Panc1 (cell line): ENCODE measurements at regions of chr3 and their contacts with region 1.

Region 1: DNA sequence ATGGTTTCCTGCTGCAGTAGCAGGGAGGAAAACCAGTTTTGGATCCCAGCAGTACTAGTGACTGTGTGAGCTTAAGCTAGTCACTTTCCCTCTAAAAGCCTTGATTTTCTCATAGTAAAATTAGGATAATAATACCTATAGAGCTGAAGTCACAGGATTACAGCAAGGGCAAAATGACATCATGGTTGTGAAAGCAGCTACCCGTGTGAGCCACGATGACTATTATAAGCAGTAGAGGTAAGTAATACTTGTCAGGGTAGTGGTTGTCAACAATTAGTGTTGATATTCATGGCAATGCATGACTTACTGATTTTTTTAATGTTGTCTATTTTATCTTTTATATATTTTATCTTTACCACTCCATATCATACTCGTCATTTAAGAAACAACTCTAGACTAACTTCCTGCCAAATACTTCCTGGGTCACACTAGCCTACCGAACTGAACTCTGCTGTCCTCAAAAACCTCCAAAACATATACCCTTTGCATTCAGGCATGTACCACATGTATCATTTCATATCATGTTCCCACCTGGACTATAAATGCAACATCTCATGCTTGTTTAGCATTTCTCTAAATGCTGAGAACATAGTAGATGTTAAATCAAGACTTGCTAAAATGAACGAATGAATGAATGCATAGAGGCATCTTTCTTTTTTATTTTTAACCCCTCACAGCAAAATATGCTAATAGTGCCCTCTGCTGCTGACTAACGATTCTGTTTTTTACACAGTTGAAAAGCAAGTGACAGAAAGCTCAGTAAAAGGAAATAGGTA is 172.6 kb downstream of the P3H2 start:
- DNase-seq: peak; percentile 75
- ATAC-seq: peak; percentile 60
- H3K4me3 ChIP-seq: no peak overlapping the region
- H3K27ac ChIP-seq: peak overlapping the region; percentile 1; the same call in 1 of the 2 replicates
- H3K4me1 ChIP-seq: no peaks in the 10 kb centered on the region
- H3K27me3 ChIP-seq: no peaks in the 10 kb centered on the region
- CTCF ChIP-seq: peak; percentile 73; the same call in 1 of the 2 replicates

Region 2: DNA sequence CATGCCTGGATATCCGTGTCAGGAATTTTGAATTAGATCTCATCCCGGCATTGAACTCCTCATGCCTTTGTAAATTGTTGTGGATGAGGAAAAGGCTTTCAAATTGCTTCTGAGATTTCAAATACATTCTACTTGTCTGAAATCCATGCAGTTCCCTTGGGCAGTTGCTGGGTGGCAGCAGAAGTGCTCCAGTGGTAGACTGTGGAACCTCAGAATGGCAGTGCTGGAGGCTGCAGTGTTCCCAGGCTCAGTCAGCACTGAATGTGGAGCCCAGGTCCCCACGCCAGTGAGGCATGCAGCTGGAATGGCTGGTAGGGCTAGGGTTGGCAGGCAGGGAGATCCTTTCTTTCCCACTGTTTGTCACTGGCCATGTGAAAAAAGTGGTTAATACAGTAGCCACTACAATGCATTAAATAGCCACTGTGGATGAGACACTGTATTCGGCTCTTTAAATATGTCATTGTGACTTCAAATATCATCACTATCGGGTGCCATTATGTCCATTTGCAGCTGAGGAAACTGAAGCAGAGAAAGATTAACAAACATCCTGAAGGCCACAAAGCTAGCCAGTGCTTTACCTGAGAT is 677.8 kb before region 1 on chr3:
- CTCF ChIA-PET with region 1: interaction called, 11 read pairs
- POLR2A ChIA-PET with region 1: no interaction called
- in situ Hi-C with region 1: no loop called
- intact Hi-C with region 1: loop called (anchors 2 kb)
- DNase-seq: peak; percentile 68
- ATAC-seq: peak; percentile 96
- H3K4me3 ChIP-seq: no peak overlapping the region
- H3K27ac ChIP-seq: no peak overlapping the region
- H3K4me1 ChIP-seq: no peaks in the 10 kb centered on the region
- H3K27me3 ChIP-seq: no peaks in the 10 kb centered on the region
- CTCF ChIP-seq: peak; percentile 85

Region 3: GRCh38 chr3:189790658-189791057 is 157.5 kb before region 1 on chr3:
- CTCF ChIA-PET with region 1: no interaction called
- POLR2A ChIA-PET with region 1: no interaction called
- in situ Hi-C with region 1: no loop called
- intact Hi-C with region 1: loop called (anchors 10 kb)
- DNase-seq: no peak
- ATAC-seq: no peak
- H3K4me3 ChIP-seq: peak overlapping the region in 1 of 2 experiments; percentile 7; a peak in 1 of 4 replicates
- H3K27ac ChIP-seq: no peak overlapping the region
- H3K4me1 ChIP-seq: no peaks in the 10 kb centered on the region
- H3K27me3 ChIP-seq: no peaks in the 10 kb centered on the region
- CTCF ChIP-seq: 0 out of 2 replicates have a peak, but pooled peaks have one; percentile 8

Region 4: GRCh38 chr3:190038050-190038933 is 90.2 kb after region 1 on chr3:
- CTCF ChIA-PET with region 1: no interaction called
- POLR2A ChIA-PET with region 1: no interaction called
- in situ Hi-C with region 1: no loop called
- intact Hi-C with region 1: no loop called
- DNase-seq: no peak
- ATAC-seq: 0 out of 2 replicates have a peak, but pooled peaks have one; percentile 38
- H3K4me3 ChIP-seq: no peak overlapping the region
- H3K27ac ChIP-seq: no peak overlapping the region; the same call in 1 of the 2 replicates
- H3K4me1 ChIP-seq: peaks cover 35% of the 10 kb centered on the region
- H3K27me3 ChIP-seq: no peaks in the 10 kb centered on the region
- CTCF ChIP-seq: no peak

Region 5: GRCh38 chr3:190224863-190225692 is 276.9 kb after region 1 on chr3:
- CTCF ChIA-PET with region 1: no interaction called
- POLR2A ChIA-PET with region 1: no interaction called
- in situ Hi-C with region 1: no loop called
- intact Hi-C with region 1: no loop called
- DNase-seq: peak; percentile 46
- ATAC-seq: peak; percentile 67
- H3K4me3 ChIP-seq: no peak overlapping the region
- H3K27ac ChIP-seq: no peak overlapping the region; the same call in 1 of the 2 replicates
- H3K4me1 ChIP-seq: peaks cover 2% of the 10 kb centered on the region; the same call in 1 of the 2 replicates
- H3K27me3 ChIP-seq: no peaks in the 10 kb centered on the region
- CTCF ChIP-seq: peak; percentile 61; the same call in 1 of the 2 replicates

Region 6: DNA sequence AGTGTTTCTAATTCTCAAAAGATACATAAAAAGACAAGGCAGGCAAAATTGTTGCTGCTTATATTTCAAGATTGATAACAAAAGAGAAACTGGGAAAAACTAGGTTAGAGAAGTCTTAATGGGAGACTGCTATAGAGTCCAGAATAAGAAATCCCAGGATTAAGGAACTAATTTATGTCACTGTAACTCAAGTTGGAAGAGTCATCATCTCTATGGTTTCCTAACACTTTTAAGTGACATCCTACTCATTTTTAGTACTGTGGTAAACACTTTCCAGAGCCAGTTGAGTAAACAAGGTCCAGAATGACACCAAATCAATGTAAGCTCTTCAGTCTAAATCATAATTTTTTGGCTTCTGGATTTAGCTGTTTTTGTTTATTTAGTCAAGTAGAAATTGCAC is 447.9 kb after region 1 on chr3:
- CTCF ChIA-PET with region 1: no interaction called
- POLR2A ChIA-PET with region 1: interaction called, 10 read pairs
- in situ Hi-C with region 1: no loop called
- intact Hi-C with region 1: no loop called
- DNase-seq: no peak
- ATAC-seq: no peak
- H3K4me3 ChIP-seq: no peak overlapping the region
- H3K27ac ChIP-seq: no peak overlapping the region
- H3K4me1 ChIP-seq: no peaks in the 10 kb centered on the region
- H3K27me3 ChIP-seq: no peaks in the 10 kb centered on the region
- CTCF ChIP-seq: no peak